ENCODE measurements at regions of chr12 and their contacts with region 1.

Region 1: GRCh38 chr12:57111031-57111734 is at the start of gene STAT6:
- DNase-seq: peak; percentile 67 to 87
- ATAC-seq: peak; percentile 71 to 78
- H3K4me3 ChIP-seq: peak within 1 kb of the TSS; percentile 59
- H3K27ac ChIP-seq: peak within 1 kb of the TSS; percentile 92 to 98
- H3K4me1 ChIP-seq: peaks cover 19% of the 10 kb centered on the region
- CTCF ChIP-seq: no peak; the same call in 2 of the 3 replicates
- EP300 ChIP-seq: no peak
- POLR2A ChIP-seq: peak; percentile 37
- RAD21 ChIP-seq: no peak
- polyA plus RNA-seq, gene STAT6: 58.8 and 64.6 TPM in 2 replicates

Region 2: DNA sequence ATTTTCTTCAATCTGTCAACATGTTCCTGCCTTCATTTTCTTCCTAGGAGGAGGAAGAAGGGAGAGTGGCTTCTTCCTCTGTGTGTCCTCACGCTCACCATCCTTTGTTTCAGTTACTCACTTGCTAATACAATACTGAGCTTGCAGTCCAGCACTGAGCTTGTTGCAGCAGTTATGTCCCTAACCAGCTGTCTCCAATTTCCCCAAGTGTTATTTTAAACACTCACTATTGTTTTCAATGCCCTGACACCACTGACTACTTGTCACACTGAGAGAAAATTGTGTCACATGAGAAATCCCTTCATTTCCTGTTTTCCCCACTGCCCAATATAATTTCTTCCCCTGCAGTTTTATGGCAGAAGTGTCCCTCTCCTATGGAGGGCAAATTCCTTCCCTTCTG is 294.7 kb before region 1 on chr12:
- CTCF ChIA-PET with region 1: no interaction called
- POLR2A ChIA-PET with region 1: no interaction called
- DNase-seq: no peak
- ATAC-seq: no peak; a peak in 1 of 6 replicates
- H3K4me3 ChIP-seq: no peak overlapping the region
- H3K27ac ChIP-seq: no peak overlapping the region
- H3K4me1 ChIP-seq: 0 out of 3 replicates have a peak, but pooled peaks cover 3% of the 10 kb centered on the region
- CTCF ChIP-seq: no peak
- EP300 ChIP-seq: no peak
- POLR2A ChIP-seq: no peak
- RAD21 ChIP-seq: no peak

Region 3: GRCh38 chr12:57005980-57006808 is 105.0 kb before region 1 on chr12 and contains the start of gene ZBTB39:
- CTCF ChIA-PET with region 1: interaction called, 39 read pairs
- POLR2A ChIA-PET with region 1: no interaction called
- DNase-seq: peak; percentile 60 to 82
- ATAC-seq: peak; percentile 67 to 76
- H3K4me3 ChIP-seq: peak within 1 kb of the TSS; percentile 99
- H3K27ac ChIP-seq: peak within 1 kb of the TSS; percentile 98 to 99
- H3K4me1 ChIP-seq: peaks cover 39% of the 10 kb centered on the region
- CTCF ChIP-seq: peak; percentile 97
- EP300 ChIP-seq: no peak
- POLR2A ChIP-seq: peak; percentile 83
- RAD21 ChIP-seq: no peak; a peak in 1 of 5 replicates
- polyA plus RNA-seq, gene ZBTB39: 9.5 and 9.8 TPM in 2 replicates

Region 4: DNA sequence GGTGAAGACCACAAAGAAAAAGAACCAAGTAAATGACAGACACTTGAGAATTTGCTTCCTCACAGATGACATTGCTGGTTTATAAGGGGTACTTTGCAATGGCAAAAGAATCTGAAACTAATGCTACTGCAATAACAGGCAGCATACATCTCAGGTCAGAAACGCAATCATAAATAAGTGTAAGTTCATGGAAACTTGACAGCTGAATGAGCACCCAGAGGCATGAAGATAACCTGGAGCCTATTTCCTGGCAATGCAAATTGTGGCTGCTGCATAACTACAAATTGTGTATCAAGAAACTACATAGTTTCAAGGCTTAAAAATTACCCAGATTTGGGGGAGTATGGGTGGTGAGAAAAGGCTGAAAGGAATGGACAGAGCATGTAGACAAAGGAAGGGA is 52.7 kb before region 1 on chr12:
- CTCF ChIA-PET with region 1: interaction called, 25 read pairs
- POLR2A ChIA-PET with region 1: no interaction called
- DNase-seq: no peak
- ATAC-seq: no peak
- H3K4me3 ChIP-seq: no peak overlapping the region
- H3K27ac ChIP-seq: no peak overlapping the region
- H3K4me1 ChIP-seq: no peaks in the 10 kb centered on the region
- CTCF ChIP-seq: no peak
- EP300 ChIP-seq: no peak
- POLR2A ChIP-seq: no peak
- RAD21 ChIP-seq: no peak

Region 5: GRCh38 chr12:57078519-57079404 is 32.4 kb before region 1 on chr12 and contains the start of gene NEMP1:
- CTCF ChIA-PET with region 1: interaction called, 440 read pairs
- POLR2A ChIA-PET with region 1: interaction called, 32 read pairs
- DNase-seq: peak; percentile 97 to 100
- ATAC-seq: peak; percentile 99 to 100
- H3K4me3 ChIP-seq: peak within 1 kb of the TSS; percentile 78
- H3K27ac ChIP-seq: peak within 1 kb of the TSS; percentile 77 to 92
- H3K4me1 ChIP-seq: peaks cover 10% of the 10 kb centered on the region; the same call in 2 of the 3 replicates
- CTCF ChIP-seq: no peak
- EP300 ChIP-seq: no peak
- POLR2A ChIP-seq: peak; percentile 45
- RAD21 ChIP-seq: no peak
- polyA plus RNA-seq, gene NEMP1: 24.7 and 28.4 TPM in 2 replicates

Region 6: GRCh38 chr12:57124259-57124877 is 13.2 kb after region 1 on chr12:
- CTCF ChIA-PET with region 1: interaction called, 65 read pairs
- POLR2A ChIA-PET with region 1: interaction called, 20 read pairs
- DNase-seq: peak; percentile 77 to 84
- ATAC-seq: peak; percentile 46 to 61; a peak in 3 of 6 replicates
- H3K4me3 ChIP-seq: no peak overlapping the region
- H3K27ac ChIP-seq: no peak overlapping the region
- H3K4me1 ChIP-seq: peaks cover 10% of the 10 kb centered on the region; the same call in 2 of the 3 replicates
- CTCF ChIP-seq: peak; percentile 94
- EP300 ChIP-seq: no peak
- POLR2A ChIP-seq: no peak
- RAD21 ChIP-seq: peak; percentile 86 to 92

Region 7: DNA sequence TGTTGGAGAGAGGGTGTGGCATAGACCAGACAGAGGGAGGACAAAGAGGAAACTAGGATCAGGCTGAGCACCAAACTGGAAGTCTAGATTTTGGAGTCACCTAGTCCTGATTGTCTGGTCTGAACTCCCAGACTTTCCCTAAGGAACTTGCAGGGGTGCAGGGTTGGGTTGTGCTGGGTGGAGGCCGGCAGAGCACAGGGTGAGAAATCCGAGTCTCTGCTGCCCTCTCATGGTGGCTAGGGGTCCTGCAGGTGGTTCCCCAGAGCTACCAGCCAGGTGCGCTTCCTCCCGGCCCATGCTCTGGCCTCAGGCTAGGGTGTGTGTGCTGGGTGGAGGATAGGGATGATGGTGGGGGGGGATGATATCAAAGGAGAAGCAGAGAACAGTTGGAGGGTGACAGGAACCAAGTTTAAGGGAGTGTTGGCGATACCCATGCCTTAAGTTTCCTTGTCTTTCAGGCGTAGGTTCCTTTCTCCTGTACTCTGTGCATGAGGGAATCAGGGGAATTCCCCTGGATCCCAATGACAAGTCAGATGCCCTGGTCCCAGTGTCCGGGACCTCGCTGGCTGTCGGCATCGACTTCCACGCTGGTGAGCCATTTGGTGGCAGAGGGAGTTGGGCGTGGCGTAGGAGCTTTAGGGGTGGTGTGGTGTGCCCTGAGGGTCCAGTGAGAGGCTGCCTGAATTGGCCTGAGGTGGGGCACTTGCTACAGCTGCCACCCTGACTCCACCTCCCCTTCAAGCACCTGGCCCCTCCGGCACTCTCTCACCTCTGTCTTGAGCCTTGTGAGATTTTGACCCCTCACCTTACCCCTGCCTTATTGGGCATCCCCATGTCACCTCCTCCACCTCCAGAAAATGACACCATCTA is 72.0 kb after region 1 on chr12:
- CTCF ChIA-PET with region 1: interaction called, 1,152 read pairs
- POLR2A ChIA-PET with region 1: no interaction called
- DNase-seq: peak; percentile 73 to 94
- ATAC-seq: peak; percentile 79 to 95
- H3K4me3 ChIP-seq: no peak overlapping the region
- H3K27ac ChIP-seq: no peak overlapping the region
- H3K4me1 ChIP-seq: no peaks in the 10 kb centered on the region
- CTCF ChIP-seq: peak; percentile 85
- EP300 ChIP-seq: no peak
- POLR2A ChIP-seq: no peak
- RAD21 ChIP-seq: peak; percentile 91